ENCODE measurements at regions of chr14 and their contacts with region 1.

Region 1: GRCh38 chr14:39230416-39231035 is 3.2 kb upstream of the MIA2 start:
- DNase-seq: peak in 1 of 4 experiments; percentile 19
- ATAC-seq: no peak
- H3K4me3 ChIP-seq: no peak overlapping the region
- H3K27ac ChIP-seq: no peak overlapping the region
- H3K4me1 ChIP-seq: peaks cover 0 to 20% of the 10 kb centered on the region in 2 experiments; a peak in 3 of 5 replicates
- H3K27me3 ChIP-seq: no peaks in the 10 kb centered on the region
- CTCF ChIP-seq: no peak
- EP300 ChIP-seq: no peak
- POLR2A ChIP-seq: no peak
- RAD21 ChIP-seq: no peak

Region 2: GRCh38 chr14:39181026-39181692 is 49.4 kb before region 1 on chr14:
- CTCF ChIA-PET with region 1: no interaction called
- POLR2A ChIA-PET with region 1: no interaction called
- in situ Hi-C with region 1: no loop called
- intact Hi-C with region 1: no loop called
- DNase-seq: no peak
- ATAC-seq: peak; percentile 8
- H3K4me3 ChIP-seq: no peak overlapping the region
- H3K27ac ChIP-seq: no peak overlapping the region
- H3K4me1 ChIP-seq: no peaks in the 10 kb centered on the region; a peak in 1 of 5 replicates
- H3K27me3 ChIP-seq: no peaks in the 10 kb centered on the region
- CTCF ChIP-seq: no peak
- EP300 ChIP-seq: no peak
- POLR2A ChIP-seq: peak; percentile 71
- RAD21 ChIP-seq: no peak

Region 3: GRCh38 chr14:39368261-39368959 is 137.9 kb after region 1 on chr14:
- CTCF ChIA-PET with region 1: interaction called, 9 read pairs
- POLR2A ChIA-PET with region 1: no interaction called
- in situ Hi-C with region 1: no loop called
- intact Hi-C with region 1: loop called (anchors 1 kb)
- DNase-seq: peak in 3 of 4 experiments; percentile 9 to 54 (median 16)
- ATAC-seq: peak; percentile 84
- H3K4me3 ChIP-seq: no peak overlapping the region
- H3K27ac ChIP-seq: no peak overlapping the region
- H3K4me1 ChIP-seq: no peaks in the 10 kb centered on the region; a peak in 1 of 5 replicates
- H3K27me3 ChIP-seq: no peaks in the 10 kb centered on the region
- CTCF ChIP-seq: peak; percentile 47 to 70 (median 52)
- EP300 ChIP-seq: no peak
- POLR2A ChIP-seq: no peak
- RAD21 ChIP-seq: peak; percentile 34 to 63

Region 4: GRCh38 chr14:39426605-39427004 is 196.1 kb after region 1 on chr14:
- CTCF ChIA-PET with region 1: no interaction called
- POLR2A ChIA-PET with region 1: no interaction called
- in situ Hi-C with region 1: no loop called
- intact Hi-C with region 1: loop called (anchors 2 kb)
- DNase-seq: no peak
- ATAC-seq: no peak
- H3K4me3 ChIP-seq: no peak overlapping the region
- H3K27ac ChIP-seq: no peak overlapping the region
- H3K4me1 ChIP-seq: peaks cover 2 to 5% of the 10 kb centered on the region in 2 experiments; a peak in 4 of 5 replicates
- H3K27me3 ChIP-seq: no peaks in the 10 kb centered on the region
- CTCF ChIP-seq: peak in 1 of 3 experiments; percentile 27; a peak in 2 of 6 replicates
- EP300 ChIP-seq: no peak
- POLR2A ChIP-seq: no peak
- RAD21 ChIP-seq: peak in 1 of 2 experiments; percentile 49; a peak in 2 of 4 replicates

Region 5: GRCh38 chr14:39469094-39469710 is 238.7 kb after region 1 on chr14:
- CTCF ChIA-PET with region 1: no interaction called
- POLR2A ChIA-PET with region 1: no interaction called
- in situ Hi-C with region 1: no loop called
- intact Hi-C with region 1: loop called (anchors 1 kb)
- DNase-seq: peak in 1 of 4 experiments; percentile 25
- ATAC-seq: peak; percentile 85
- H3K4me3 ChIP-seq: no peak overlapping the region
- H3K27ac ChIP-seq: no peak overlapping the region
- H3K4me1 ChIP-seq: no peaks in the 10 kb centered on the region; a peak in 1 of 5 replicates
- H3K27me3 ChIP-seq: no peaks in the 10 kb centered on the region
- CTCF ChIP-seq: peak; percentile 26 to 46 (median 38); a peak in 3 of 6 replicates
- EP300 ChIP-seq: no peak
- POLR2A ChIP-seq: no peak
- RAD21 ChIP-seq: peak; percentile 18 to 63; a peak in 2 of 4 replicates

Measured in K562 (cell line).